Transverse colon (tissue), 4 donors: ENCODE measurements at regions of chr5 and their contacts with region 1.

Region 1: GRCh38 chr5:6712577-6713275 is 506 bp upstream of the TENT4A start:
- DNase-seq: peak; percentile 98
- H3K4me3 ChIP-seq: peak overlapping the region; percentile 69 to 84 (median 80)
- H3K27ac ChIP-seq: peak overlapping the region; percentile 96 to 99 (median 98)
- H3K4me1 ChIP-seq: peaks cover 28 to 37% (median 32%) of the 10 kb centered on the region in 4 donors
- H3K27me3 ChIP-seq: no peaks in the 10 kb centered on the region
- CTCF ChIP-seq: no peak
- EP300 ChIP-seq: no peak
- POLR2A ChIP-seq: peak; percentile 49

Region 2: GRCh38 chr5:6632917-6633468 is 79.7 kb before region 1 on chr5 and contains the starts of genes NSUN2 and SRD5A1:
- in situ Hi-C with region 1: loop called in 1 of 4 experiments (anchors 10 kb)
- intact Hi-C with region 1: loop called (anchors 5 kb)
- DNase-seq: peak; percentile 94
- H3K4me3 ChIP-seq: peak within 1 kb of the TSS; percentile 89 to 93 (median 92)
- H3K27ac ChIP-seq: peak within 1 kb of the TSS; percentile 85 to 94 (median 92)
- H3K4me1 ChIP-seq: peaks cover 9 to 27% (median 22%) of the 10 kb centered on the region in 4 donors
- H3K27me3 ChIP-seq: no peaks in the 10 kb centered on the region
- CTCF ChIP-seq: no peak
- EP300 ChIP-seq: no peak
- POLR2A ChIP-seq: peak; percentile 55
- total RNA-seq, gene NSUN2: 29.9 to 77.1 (median 51.7) TPM
- total RNA-seq, gene SRD5A1: 9.0 to 79.8 (median 17.0) TPM